ENCODE measurements at regions of chr5 and their contacts with region 1.

Region 1: DNA sequence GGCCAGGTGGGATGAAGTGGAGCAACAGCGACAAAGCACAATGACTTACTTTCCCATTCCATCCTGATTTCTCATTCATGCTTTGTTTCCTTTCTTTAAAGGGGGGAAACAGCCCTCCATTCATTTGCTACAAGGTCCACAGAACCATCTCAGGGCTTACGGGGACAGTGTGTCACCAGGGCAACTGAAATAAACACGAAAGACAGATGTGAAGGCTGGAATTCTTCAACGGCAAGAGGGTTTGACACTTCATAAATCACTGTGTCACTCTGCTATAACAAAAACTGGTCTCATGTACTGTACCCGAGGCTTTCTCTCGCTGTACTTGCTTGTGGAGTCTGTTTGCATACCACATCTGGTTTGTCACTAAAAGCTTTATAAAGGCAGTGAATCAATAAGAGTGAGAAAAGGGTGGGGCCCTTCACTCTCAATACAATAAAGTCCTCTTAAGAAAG is 150.8 kb downstream of the EFNA5 start:
- DNase-seq: peak; percentile 36 to 38
- H3K4me3 ChIP-seq: no peak overlapping the region
- H3K27ac ChIP-seq: no peak overlapping the region; the same call in 1 of the 2 replicates
- H3K4me1 ChIP-seq: peaks cover 3% of the 10 kb centered on the region; the same call in 1 of the 2 replicates
- H3K27me3 ChIP-seq: no peaks in the 10 kb centered on the region
- CTCF ChIP-seq: no peak

Region 2: DNA sequence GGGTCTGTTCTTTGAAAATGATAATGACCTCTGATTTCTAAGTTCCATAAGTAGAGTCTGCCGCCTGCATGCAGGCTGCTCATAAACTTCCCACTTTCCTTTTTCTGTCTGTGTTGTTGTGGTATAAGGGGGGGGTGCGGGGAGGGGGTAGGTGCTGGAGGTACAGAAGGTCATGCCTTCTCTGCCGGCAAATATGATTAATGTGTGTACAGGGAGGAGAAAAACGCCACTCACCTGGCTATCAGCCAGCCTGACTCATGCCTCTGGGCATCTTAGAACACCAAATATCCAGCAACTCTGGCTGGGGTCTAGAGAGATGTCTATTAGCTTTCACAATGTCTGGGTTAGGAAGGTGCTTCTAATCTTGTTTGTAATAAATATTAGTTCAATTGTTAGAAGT is 22.5 kb after region 1 on chr5:
- CTCF ChIA-PET with region 1: no interaction called
- POLR2A ChIA-PET with region 1: no interaction called
- intact Hi-C with region 1: loop called (anchors 1 kb)
- DNase-seq: peak; percentile 88 to 97
- H3K4me3 ChIP-seq: peak overlapping the region; percentile 26; the same call in 1 of the 2 replicates
- H3K27ac ChIP-seq: peak overlapping the region; percentile 93
- H3K4me1 ChIP-seq: peaks cover 59% of the 10 kb centered on the region
- H3K27me3 ChIP-seq: no peaks in the 10 kb centered on the region
- CTCF ChIP-seq: no peak

Measured in PC-9 (cell line).